ENCODE measurements at regions of chrX and their contacts with region 1.

Region 1: GRCh38 chrX:132219343-132219768 is at the start of gene RAP2C:
- DNase-seq: peak; percentile 38
- ATAC-seq: peak; percentile 31
- H3K4me3 Mint-ChIP-seq: peak within 1 kb of the TSS; percentile 87
- H3K27ac Mint-ChIP-seq: peak within 1 kb of the TSS; percentile 91
- H3K4me1 Mint-ChIP-seq: peaks cover 28% of the 10 kb centered on the region
- H3K27me3 Mint-ChIP-seq: no peaks in the 10 kb centered on the region
- CTCF ChIP-seq: no peak
- total RNA-seq, gene RAP2C: 43.8 and 49.8 TPM in 2 replicates

Region 2: DNA sequence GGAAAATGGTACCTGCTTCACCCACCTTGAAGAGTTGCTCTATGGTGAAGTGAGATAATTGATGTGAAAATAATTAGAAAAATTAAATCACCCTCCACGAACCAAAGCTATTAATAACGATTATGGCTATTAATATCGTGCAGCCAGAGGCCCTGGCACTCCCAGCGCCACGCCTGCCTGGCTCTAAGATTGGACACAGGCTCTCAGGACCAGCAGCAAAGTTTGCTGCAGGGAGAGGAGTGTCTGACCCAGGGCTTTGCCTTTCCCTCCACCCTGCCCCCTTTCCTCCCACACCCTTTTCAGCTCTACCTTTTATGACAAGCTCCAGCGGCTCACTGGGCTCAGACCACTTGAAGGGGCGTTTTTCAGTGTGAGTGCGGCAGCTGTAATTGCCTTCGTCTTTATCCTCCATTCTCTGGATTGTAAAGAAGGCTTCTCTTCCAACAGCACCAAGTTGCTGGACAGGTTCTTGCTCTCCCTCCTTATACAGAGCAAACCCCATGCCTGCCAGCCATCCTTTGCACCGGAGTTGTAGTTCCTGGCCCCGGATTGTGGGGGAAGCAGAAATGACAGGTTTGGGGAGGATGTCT is 941.7 kb before region 1 on chrX:
- CTCF ChIA-PET with region 1: no interaction called
- POLR2A ChIA-PET with region 1: no interaction called
- intact Hi-C with region 1: no loop called
- DNase-seq: no peak
- ATAC-seq: no peak
- H3K4me3 Mint-ChIP-seq: no peak overlapping the region
- H3K27ac Mint-ChIP-seq: no peak overlapping the region
- H3K4me1 Mint-ChIP-seq: no peaks in the 10 kb centered on the region
- H3K27me3 Mint-ChIP-seq: peaks cover 2% of the 10 kb centered on the region
- CTCF ChIP-seq: no peak

Region 3: GRCh38 chrX:131854581-131854980 is 364.8 kb before region 1 on chrX:
- CTCF ChIA-PET with region 1: interaction called, 7 read pairs
- POLR2A ChIA-PET with region 1: interaction called, 4 read pairs
- intact Hi-C with region 1: loop called (anchors 1 kb)
- DNase-seq: no peak
- ATAC-seq: no peak
- H3K4me3 Mint-ChIP-seq: no peak overlapping the region
- H3K27ac Mint-ChIP-seq: no peak overlapping the region
- H3K4me1 Mint-ChIP-seq: no peaks in the 10 kb centered on the region
- H3K27me3 Mint-ChIP-seq: no peaks in the 10 kb centered on the region
- CTCF ChIP-seq: no peak

Region 4: DNA sequence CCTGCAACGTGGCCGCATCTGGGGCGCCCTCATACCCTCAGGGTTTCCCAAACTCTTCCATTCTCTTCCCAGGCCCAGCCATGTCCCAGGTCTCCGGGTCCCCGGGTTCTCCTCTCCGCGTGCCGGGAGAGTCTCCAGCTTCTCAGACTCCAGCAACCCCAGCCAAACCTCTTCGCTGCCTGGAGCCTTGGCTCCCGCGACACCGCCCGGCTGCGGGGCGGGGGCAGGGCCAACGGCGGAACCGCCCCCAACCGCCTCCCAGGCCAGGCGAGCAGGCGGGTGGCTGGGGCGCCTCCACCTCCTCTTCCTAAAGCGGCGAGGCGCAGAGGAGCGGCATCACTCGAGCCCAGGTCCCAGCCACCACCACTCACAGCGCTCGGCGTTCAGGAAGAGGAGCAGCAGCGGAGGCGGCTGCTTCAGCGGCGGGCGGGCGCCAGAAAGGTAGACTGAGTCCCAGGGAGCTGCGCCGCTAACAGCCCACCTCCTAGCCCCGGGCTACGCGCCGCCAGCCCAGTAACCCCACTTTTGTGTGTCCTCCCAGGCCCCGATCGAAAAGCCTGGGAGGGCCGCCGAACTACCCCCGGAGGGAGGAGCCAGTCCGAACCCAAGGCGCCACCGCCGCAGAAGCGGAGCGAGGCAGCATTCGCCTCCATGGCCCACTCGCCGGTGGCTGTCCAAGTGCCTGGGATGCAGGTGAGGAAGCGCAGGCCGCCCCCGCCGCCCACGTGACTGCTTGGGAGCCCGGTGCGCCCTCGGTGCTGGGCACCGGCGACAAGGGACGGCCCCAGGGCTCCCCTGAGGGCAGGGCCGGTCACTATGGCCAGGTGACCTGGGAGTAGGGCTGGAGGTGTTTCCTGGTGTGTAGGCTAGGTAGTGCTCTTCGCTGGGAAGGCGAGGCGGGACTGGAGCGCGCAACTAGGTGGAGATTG is 196.1 kb before region 1 on chrX and contains the start of gene STK26:
- CTCF ChIA-PET with region 1: no interaction called
- POLR2A ChIA-PET with region 1: interaction called, 24 read pairs
- intact Hi-C with region 1: loop called (anchors 1 kb)
- DNase-seq: peak; percentile 64
- ATAC-seq: peak; percentile 84
- H3K4me3 Mint-ChIP-seq: peak within 1 kb of the TSS; percentile 90
- H3K27ac Mint-ChIP-seq: peak within 1 kb of the TSS; percentile 84
- H3K4me1 Mint-ChIP-seq: peaks cover 31% of the 10 kb centered on the region
- H3K27me3 Mint-ChIP-seq: no peaks in the 10 kb centered on the region
- CTCF ChIP-seq: no peak
- total RNA-seq, gene STK26: 19.9 and 20.7 TPM in 2 replicates

Region 5: GRCh38 chrX:132206259-132206658 is 13.1 kb before region 1 on chrX:
- CTCF ChIA-PET with region 1: interaction called, 3 read pairs
- POLR2A ChIA-PET with region 1: interaction called, 16 read pairs
- intact Hi-C with region 1: no loop called
- DNase-seq: no peak
- ATAC-seq: no peak
- H3K4me3 Mint-ChIP-seq: no peak overlapping the region
- H3K27ac Mint-ChIP-seq: no peak overlapping the region
- H3K4me1 Mint-ChIP-seq: peaks cover 26% of the 10 kb centered on the region
- H3K27me3 Mint-ChIP-seq: no peaks in the 10 kb centered on the region
- CTCF ChIP-seq: no peak

Region 6: DNA sequence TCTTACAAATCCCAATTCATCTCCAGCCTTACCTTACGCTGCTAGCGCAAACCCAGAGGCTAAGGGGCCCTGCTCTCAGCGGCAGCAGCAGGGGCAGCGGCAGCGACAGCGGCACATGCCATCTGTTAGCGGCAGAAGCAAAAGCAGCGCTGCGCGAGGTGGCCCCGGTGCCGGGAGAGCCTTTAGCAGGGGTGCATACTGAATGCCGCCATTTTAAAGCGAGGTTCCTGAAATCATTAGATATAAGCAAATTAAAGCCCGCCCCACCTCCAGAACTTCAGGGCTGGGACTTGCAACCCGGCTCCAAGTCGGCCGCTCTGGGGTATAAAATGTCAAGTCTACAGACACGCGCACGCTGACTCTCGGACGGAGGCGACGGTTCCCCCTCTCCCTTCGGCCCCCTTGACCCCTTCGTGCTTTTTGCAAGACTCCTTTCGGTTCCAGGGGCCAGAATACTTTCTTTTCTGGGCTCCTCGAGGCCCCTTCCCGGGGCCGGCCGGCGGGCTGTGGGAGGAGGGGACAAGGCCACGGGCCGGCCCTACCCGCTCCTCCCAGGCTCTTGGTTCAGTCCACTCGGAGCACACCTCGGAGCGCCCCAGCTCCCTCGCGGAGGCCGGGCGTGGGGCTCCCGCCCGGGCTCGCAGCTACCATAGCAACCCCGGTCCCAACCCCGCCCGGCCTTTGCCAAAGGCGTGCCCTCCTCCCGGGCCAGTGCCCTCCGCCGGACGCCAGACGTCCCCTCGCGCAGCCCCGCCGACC is 269.6 kb after region 1 on chrX and contains the start of gene MBNL3:
- CTCF ChIA-PET with region 1: interaction called, 4 read pairs
- POLR2A ChIA-PET with region 1: interaction called, 12 read pairs
- intact Hi-C with region 1: loop called (anchors 1 kb)
- DNase-seq: peak; percentile 61
- ATAC-seq: peak; percentile 63
- H3K4me3 Mint-ChIP-seq: peak within 1 kb of the TSS; percentile 98
- H3K27ac Mint-ChIP-seq: peak within 1 kb of the TSS; percentile 99
- H3K4me1 Mint-ChIP-seq: peaks cover 60% of the 10 kb centered on the region
- H3K27me3 Mint-ChIP-seq: no peaks in the 10 kb centered on the region
- CTCF ChIP-seq: no peak
- total RNA-seq, gene MBNL3: 41.0 and 47.0 TPM in 2 replicates

Region 7: GRCh38 chrX:132710656-132711155 is 491.4 kb after region 1 on chrX:
- CTCF ChIA-PET with region 1: no interaction called
- POLR2A ChIA-PET with region 1: no interaction called
- intact Hi-C with region 1: no loop called
- DNase-seq: no peak
- ATAC-seq: no peak
- H3K4me3 Mint-ChIP-seq: no peak overlapping the region
- H3K27ac Mint-ChIP-seq: no peak overlapping the region
- H3K4me1 Mint-ChIP-seq: no peaks in the 10 kb centered on the region
- H3K27me3 Mint-ChIP-seq: no peaks in the 10 kb centered on the region
- CTCF ChIP-seq: no peak

Measured in activated B cell treated with CpG ODN at 0.5 μM for 24 hours (primary cell).